MCF 10A (cell line): ENCODE measurements at regions of chr7 and their contacts with region 1.

Region 1: DNA sequence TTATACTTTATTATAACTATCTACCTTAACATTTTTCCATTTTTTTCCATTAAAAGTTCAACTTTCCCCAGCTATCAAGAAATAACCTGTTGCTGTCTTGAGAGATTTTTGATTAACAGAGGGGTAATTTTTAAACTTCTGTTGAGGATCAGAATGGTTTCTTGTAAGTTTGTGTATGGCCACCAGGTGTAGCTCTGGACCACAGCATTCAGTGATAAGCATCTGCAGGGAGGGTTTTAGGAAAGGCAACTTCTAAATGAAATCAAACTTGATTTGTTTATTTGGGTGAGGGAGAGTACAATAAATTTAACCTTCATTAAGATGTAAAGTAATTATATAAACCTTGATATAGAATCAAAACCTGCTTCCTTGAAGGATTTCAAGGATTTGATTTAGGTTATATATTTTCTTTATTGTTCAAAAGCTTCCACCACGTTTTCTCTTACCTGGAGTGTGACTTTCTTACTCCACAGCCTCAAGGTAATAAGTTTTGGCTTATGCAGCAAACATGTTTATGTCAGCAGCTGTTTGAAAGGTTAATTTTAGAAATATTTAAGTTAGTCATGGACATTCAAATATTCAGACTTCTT is 153.3 kb downstream of the STK31 start:
- DNase-seq: peak; percentile 50
- H3K4me3 Mint-ChIP-seq: no peak overlapping the region
- H3K27ac Mint-ChIP-seq: no peak overlapping the region
- H3K4me1 Mint-ChIP-seq: peaks cover 13% of the 10 kb centered on the region
- H3K27me3 Mint-ChIP-seq: no peaks in the 10 kb centered on the region
- CTCF ChIP-seq: peak; percentile 80

Region 2: GRCh38 chr7:23852988-23853387 is 10.3 kb before region 1 on chr7:
- CTCF ChIA-PET with region 1: interaction called, 13 read pairs
- POLR2A ChIA-PET with region 1: no interaction called
- intact Hi-C with region 1: no loop called
- DNase-seq: no peak
- H3K4me3 Mint-ChIP-seq: no peak overlapping the region
- H3K27ac Mint-ChIP-seq: no peak overlapping the region
- H3K4me1 Mint-ChIP-seq: no peaks in the 10 kb centered on the region
- H3K27me3 Mint-ChIP-seq: no peaks in the 10 kb centered on the region
- CTCF ChIP-seq: no peak

Region 3: DNA sequence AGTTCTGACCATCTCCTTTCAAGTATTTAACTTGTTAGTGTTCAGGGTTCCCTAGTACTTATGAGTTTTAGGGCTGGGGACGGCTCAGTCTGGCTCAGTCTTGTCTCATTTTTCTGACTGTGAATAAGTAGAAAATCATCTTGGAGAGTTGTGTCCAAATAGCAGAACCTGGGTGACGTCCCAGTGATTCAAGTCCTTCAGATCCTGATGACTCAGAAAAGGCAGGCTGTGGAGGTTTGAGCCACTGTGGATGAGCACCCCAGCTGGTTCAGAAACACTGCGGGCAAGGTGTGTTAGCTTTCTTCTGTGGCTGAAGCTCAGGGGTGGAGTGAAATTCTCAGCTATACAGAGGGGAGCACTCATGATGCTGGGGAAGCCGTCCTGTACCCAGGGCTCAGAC is 266.3 kb after region 1 on chr7:
- CTCF ChIA-PET with region 1: no interaction called
- POLR2A ChIA-PET with region 1: no interaction called
- intact Hi-C with region 1: loop called (anchors 5 kb)
- DNase-seq: peak; percentile 71
- H3K4me3 Mint-ChIP-seq: no peak overlapping the region
- H3K27ac Mint-ChIP-seq: no peak overlapping the region
- H3K4me1 Mint-ChIP-seq: peaks cover 11% of the 10 kb centered on the region
- H3K27me3 Mint-ChIP-seq: no peaks in the 10 kb centered on the region
- CTCF ChIP-seq: no peak

Region 4: DNA sequence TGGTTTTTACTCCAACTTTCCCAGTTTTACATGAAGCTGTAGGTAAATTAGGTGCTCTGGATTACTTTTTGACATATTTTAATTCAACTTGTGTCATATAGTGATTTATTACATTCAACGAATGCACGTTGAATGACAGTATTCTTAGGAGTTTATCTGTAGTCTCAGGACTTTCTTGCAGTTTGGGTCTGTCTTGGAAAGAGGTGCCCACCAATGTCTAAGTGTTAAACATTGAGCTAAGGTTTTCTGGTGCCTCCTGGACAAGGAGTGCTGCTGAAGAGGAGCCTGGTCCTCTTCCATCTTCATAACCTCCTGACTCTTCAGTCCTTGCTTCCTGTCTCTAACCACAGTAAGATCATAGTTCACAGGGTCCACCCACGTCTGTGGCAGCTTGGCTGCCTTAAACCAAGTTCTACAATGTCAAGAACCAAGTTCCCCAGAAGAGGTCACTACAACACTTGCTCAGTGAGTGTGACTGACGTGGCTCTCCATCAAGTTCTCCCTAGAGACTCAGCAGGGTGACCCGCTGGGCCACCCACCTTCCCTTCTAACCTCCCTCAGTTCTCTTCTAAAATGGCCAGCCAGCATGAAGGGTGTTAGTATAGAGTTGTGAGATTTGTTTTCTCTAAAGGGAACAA is 426.8 kb after region 1 on chr7:
- CTCF ChIA-PET with region 1: interaction called, 6 read pairs
- POLR2A ChIA-PET with region 1: interaction called, 3 read pairs
- intact Hi-C with region 1: loop called (anchors 1 kb)
- DNase-seq: peak; percentile 74
- H3K4me3 Mint-ChIP-seq: no peak overlapping the region
- H3K27ac Mint-ChIP-seq: no peak overlapping the region
- H3K4me1 Mint-ChIP-seq: peaks cover 6% of the 10 kb centered on the region
- H3K27me3 Mint-ChIP-seq: peaks cover 14% of the 10 kb centered on the region
- CTCF ChIP-seq: peak; percentile 64

Region 5: DNA sequence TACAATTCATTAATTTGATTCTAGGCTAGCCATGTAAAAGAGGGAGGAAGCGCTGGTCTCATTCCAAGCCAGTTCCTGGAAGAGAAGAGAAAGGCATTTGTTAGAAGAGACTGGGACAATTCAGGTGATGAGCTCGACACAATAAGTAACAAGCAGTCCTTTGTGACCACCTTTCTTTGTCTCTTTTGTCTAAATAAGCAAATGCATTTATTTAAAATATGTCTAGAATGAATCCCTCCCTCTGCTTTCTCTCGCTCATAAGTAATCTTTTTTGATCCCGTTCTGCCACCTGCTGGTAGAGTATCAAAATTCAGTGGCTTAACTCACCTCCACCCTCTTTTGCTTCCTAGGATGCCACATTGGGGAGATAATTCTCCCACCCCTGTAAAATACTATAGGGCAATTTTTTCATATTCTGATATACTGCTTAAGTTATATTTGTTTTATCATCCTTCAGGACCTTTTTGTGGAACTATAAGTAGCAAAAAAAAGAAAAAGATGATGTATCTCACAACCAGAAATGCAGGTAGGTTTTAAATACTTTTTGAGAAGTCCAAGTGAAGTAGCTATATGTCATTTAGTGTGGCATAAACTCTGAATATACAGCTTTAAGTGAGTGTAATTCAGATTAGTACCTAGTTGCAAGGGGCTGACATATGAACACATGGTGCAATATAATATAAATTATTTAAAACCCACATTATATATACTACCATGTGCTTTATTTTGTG is 802.4 kb after region 1 on chr7:
- CTCF ChIA-PET with region 1: interaction called, 7 read pairs
- POLR2A ChIA-PET with region 1: interaction called, 3 read pairs
- intact Hi-C with region 1: loop called (anchors 1 kb)
- DNase-seq: peak; percentile 68
- H3K4me3 Mint-ChIP-seq: no peak overlapping the region
- H3K27ac Mint-ChIP-seq: no peak overlapping the region
- H3K4me1 Mint-ChIP-seq: peaks cover 21% of the 10 kb centered on the region
- H3K27me3 Mint-ChIP-seq: no peaks in the 10 kb centered on the region
- CTCF ChIP-seq: peak; percentile 63